Activated T-helper 2 cell treated with anti-CD3 and anti-CD28 coated beads, Interferon-gamma antibody, Interleukin-2, Interleukin-4, amounts not matched to agents 10 μg/mL and 5 μg/mL and 100 μg/mL, durations not matched to agents 14 hours and 24 hours and 36 hours (primary cell): ENCODE measurements at regions of chr13 and their contacts with region 1.

Region 1: DNA sequence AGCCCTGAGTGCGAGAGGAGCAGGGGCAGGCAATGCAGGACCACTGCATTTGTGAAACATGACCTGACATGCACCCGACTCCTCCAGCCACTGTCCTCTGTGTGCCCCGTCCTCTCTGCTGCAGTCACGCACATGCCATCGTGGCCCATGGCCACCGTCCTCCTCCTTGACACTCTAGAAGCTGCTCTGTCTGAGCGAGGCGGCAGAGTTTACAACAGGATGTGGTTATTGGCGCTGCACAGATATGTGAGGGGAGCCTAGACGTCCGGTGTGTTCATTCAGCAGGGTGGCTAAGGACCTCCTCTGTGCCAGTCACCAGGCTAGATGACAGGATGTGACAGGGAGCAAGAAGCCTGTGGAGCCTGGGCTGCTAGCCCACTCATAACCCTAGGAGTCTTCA is 277.8 kb downstream of the FOXO1 start:
- DNase-seq: peak; percentile 83
- H3K4me3 Mint-ChIP-seq: peak overlapping the region; percentile 80
- H3K27ac Mint-ChIP-seq: peak overlapping the region; percentile 98
- H3K4me1 Mint-ChIP-seq: peaks cover 38% of the 10 kb centered on the region
- H3K27me3 Mint-ChIP-seq: no peaks in the 10 kb centered on the region

Region 2: GRCh38 chr13:40251343-40252032 is 137.1 kb before region 1 on chr13:
- intact Hi-C with region 1: loop called (anchors 2 kb)
- DNase-seq: no peak
- H3K4me3 Mint-ChIP-seq: no peak overlapping the region
- H3K27ac Mint-ChIP-seq: peak overlapping the region; percentile 75
- H3K4me1 Mint-ChIP-seq: peaks cover 32% of the 10 kb centered on the region
- H3K27me3 Mint-ChIP-seq: no peaks in the 10 kb centered on the region

Region 3: DNA sequence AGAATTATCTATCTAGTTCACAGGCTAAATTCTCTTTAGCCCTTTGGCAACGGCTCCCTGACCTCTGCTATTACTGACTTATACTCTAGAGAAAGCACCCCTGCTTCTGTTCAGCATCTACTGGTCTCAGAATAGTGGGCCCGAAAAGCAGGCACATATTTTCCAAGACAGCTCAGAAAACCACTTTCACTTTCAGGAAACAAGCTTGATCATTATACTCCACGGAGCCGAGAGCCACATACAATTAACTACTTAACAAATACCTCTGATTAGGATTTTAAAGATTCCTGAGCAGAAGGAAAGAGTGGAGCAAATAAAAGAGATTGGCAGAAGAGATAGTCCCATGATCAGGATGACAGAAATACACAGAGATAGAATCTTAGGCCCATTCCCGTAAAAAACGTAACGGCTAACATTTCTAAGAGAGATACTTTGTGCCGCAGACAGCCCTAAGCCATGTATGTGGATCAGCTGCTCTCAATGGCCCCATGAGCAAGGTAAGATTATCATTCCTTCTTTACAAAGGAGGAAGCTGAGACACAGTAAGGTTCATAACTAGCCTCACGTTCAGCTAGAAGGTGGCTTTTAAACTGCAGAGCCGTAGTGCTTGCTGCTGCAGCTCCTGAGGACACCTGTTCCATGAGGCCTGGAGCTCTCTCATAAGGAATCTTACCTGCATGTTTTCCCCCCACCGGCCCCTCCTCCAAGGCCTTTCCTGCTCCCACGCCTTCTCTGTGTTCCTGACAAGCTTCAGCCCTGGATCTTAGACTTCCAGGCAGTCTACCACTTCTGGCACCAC is 50.6 kb after region 1 on chr13:
- intact Hi-C with region 1: loop called (anchors 2 kb)
- DNase-seq: no peak
- H3K4me3 Mint-ChIP-seq: peak overlapping the region; percentile 52
- H3K27ac Mint-ChIP-seq: peak overlapping the region; percentile 78
- H3K4me1 Mint-ChIP-seq: peaks cover 30% of the 10 kb centered on the region
- H3K27me3 Mint-ChIP-seq: no peaks in the 10 kb centered on the region

Region 4: GRCh38 chr13:40613192-40613818 is 224.7 kb after region 1 on chr13:
- intact Hi-C with region 1: loop called (anchors 2 kb)
- DNase-seq: peak; percentile 55
- H3K4me3 Mint-ChIP-seq: peak overlapping the region; percentile 80
- H3K27ac Mint-ChIP-seq: peak overlapping the region; percentile 95
- H3K4me1 Mint-ChIP-seq: peaks cover 64% of the 10 kb centered on the region
- H3K27me3 Mint-ChIP-seq: no peaks in the 10 kb centered on the region

Region 5: DNA sequence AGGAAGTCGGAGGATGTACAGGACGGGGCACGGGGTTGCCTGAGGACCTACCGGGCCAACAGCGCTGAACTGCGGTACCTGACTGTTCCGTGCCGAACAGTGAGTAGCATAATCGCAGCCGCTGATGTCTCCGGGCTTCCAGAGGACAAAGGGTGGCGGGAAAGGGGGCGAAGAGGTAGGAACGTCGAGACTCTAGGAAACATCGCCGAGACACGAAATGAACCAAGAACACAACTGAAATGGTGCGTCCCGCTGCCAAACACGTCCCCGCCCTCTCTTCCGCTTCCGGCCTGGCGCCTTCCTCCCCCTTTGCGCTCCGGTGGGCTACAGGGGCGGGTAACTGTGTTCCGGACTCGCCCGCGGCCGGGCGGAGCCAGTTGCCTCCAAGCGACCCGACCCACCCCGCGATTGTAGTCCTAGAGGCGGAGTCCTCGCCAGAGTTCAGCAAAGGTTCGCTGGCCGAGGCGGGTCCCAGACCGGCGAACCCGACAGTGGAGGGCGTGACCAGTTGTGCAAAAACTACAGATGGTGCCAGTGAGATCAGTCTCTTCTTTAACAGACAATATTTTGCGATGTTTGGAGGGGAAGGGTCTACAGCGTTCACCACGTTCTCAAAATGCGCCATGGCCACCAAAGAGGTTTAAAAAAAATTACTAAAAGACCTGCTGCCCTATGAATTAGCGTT is 382.5 kb after region 1 on chr13 and contains the start of gene MRPS31:
- intact Hi-C with region 1: loop called (anchors 10 kb)
- DNase-seq: peak; percentile 94
- H3K4me3 Mint-ChIP-seq: peak within 1 kb of the TSS; percentile 89
- H3K27ac Mint-ChIP-seq: peak within 1 kb of the TSS; percentile 90
- H3K4me1 Mint-ChIP-seq: peaks cover 36% of the 10 kb centered on the region
- H3K27me3 Mint-ChIP-seq: no peaks in the 10 kb centered on the region
- total RNA-seq, gene MRPS31: 42.9 and 43.1 TPM in 2 replicates